Caco-2 (cell line): ENCODE measurements at regions of chr3 and their contacts with region 1.

Region 1: GRCh38 chr3:134794950-134795745 is at the start of gene EPHB1:
- DNase-seq: peak; percentile 83 to 88
- H3K4me3 ChIP-seq: peak within 1 kb of the TSS; percentile 53
- H3K4me3 Mint-ChIP-seq: peak within 1 kb of the TSS; percentile 96
- H3K27ac Mint-ChIP-seq: no peak within 1 kb of the TSS
- H3K4me1 ChIP-seq: no peaks in the 10 kb centered on the region; the same call in 1 of the 2 replicates
- H3K4me1 Mint-ChIP-seq: no peaks in the 10 kb centered on the region
- H3K27me3 ChIP-seq: peaks cover 3% of the 10 kb centered on the region
- H3K27me3 Mint-ChIP-seq: peaks cover 21% of the 10 kb centered on the region
- CTCF ChIP-seq: peak; percentile 86 to 94
- total RNA-seq, gene EPHB1: 2.3 and 4.6 TPM in 2 replicates

Region 2: DNA sequence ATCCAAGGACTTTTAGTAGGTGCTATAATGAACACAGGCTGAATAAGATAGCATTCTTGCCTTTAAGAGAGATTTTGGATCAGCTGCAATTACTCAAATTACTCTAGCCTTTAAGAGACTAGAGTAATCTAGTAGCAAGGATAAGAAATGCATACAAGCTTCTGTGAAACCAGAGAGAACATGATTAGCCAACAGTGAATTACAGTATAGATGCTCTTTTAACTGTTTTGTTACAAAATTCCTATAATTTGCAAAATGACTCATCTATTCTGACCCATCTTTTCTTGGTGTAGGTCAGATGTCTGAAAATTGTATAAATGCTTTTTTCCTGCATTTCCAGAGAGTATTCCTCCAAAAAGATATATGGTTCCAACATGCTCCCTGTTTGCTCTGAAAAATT is 242.4 kb before region 1 on chr3:
- CTCF ChIA-PET with region 1: no interaction called
- POLR2A ChIA-PET with region 1: no interaction called
- intact Hi-C with region 1: no loop called
- DNase-seq: no peak
- H3K4me3 ChIP-seq: no peak overlapping the region
- H3K4me3 Mint-ChIP-seq: no peak overlapping the region
- H3K27ac Mint-ChIP-seq: no peak overlapping the region
- H3K4me1 ChIP-seq: no peaks in the 10 kb centered on the region
- H3K4me1 Mint-ChIP-seq: no peaks in the 10 kb centered on the region
- H3K27me3 ChIP-seq: no peaks in the 10 kb centered on the region
- H3K27me3 Mint-ChIP-seq: no peaks in the 10 kb centered on the region
- CTCF ChIP-seq: no peak

Region 3: GRCh38 chr3:134978658-134979057 is 183.5 kb after region 1 on chr3:
- CTCF ChIA-PET with region 1: interaction called, 7 read pairs
- POLR2A ChIA-PET with region 1: no interaction called
- intact Hi-C with region 1: loop called (anchors 10 kb)
- DNase-seq: no peak
- H3K4me3 ChIP-seq: no peak overlapping the region
- H3K4me3 Mint-ChIP-seq: no peak overlapping the region
- H3K27ac Mint-ChIP-seq: no peak overlapping the region
- H3K4me1 ChIP-seq: no peaks in the 10 kb centered on the region
- H3K4me1 Mint-ChIP-seq: no peaks in the 10 kb centered on the region
- H3K27me3 ChIP-seq: no peaks in the 10 kb centered on the region
- H3K27me3 Mint-ChIP-seq: peaks cover 17% of the 10 kb centered on the region
- CTCF ChIP-seq: no peak

Region 4: GRCh38 chr3:135503760-135504686 is 708.9 kb after region 1 on chr3:
- CTCF ChIA-PET with region 1: interaction called, 12 read pairs
- POLR2A ChIA-PET with region 1: no interaction called
- intact Hi-C with region 1: no loop called
- DNase-seq: peak; percentile 71 to 78
- H3K4me3 ChIP-seq: no peak overlapping the region
- H3K4me3 Mint-ChIP-seq: no peak overlapping the region
- H3K27ac Mint-ChIP-seq: no peak overlapping the region
- H3K4me1 ChIP-seq: no peaks in the 10 kb centered on the region
- H3K4me1 Mint-ChIP-seq: no peaks in the 10 kb centered on the region
- H3K27me3 ChIP-seq: no peaks in the 10 kb centered on the region
- H3K27me3 Mint-ChIP-seq: peaks cover 17% of the 10 kb centered on the region
- CTCF ChIP-seq: peak; percentile 46 to 85